Posterior cingulate gyrus (tissue), 11 donors: ENCODE measurements at regions of chr18 and their contacts with region 1.

Region 1: GRCh38 chr18:70273021-70273420 is 15.8 kb upstream of the SOCS6 start:
- DNase-seq: no peak

Region 2: DNA sequence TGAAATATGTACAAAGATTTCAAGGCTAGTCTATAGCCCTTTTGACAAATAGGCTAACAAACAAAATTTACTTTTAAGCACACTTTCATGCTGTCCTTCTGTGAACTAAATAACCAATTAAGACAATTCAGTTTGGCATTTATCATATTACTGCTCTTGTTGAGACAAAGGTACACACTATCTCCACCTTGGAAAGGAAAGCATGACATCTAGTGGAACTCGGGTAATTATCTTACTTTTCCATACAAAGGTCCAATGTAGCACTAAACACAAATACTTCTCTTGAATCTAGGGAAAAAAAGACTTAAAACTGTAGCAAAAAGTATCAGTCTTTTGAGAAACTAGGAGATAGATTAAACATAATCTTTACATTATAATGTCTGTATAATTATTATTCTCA is 200.3 kb before region 1 on chr18:
- intact Hi-C with region 1: no loop called
- DNase-seq: no peak

Region 3: DNA sequence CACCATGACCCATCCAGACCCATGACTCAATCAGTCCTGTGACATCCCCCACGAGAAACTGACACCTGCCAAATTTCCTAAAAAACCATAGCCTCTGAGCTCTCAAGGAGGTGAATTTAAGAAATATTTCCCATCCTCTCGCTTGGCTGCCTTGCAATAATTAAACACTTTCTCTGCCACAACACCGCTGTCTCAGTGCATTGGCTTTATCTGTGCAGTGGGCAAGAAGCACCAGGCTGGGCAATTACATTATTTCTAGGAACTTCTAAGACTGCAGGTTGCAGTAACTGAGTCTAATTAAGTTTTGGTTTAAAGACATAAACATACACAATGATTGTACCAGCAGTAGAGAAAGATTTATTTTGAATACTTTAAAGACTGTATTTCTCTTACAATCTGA is 45.6 kb before region 1 on chr18:
- intact Hi-C with region 1: loop called (anchors 2 kb)
- DNase-seq: no peak